ENCODE measurements at regions of chr2 and their contacts with region 1.

Region 1: DNA sequence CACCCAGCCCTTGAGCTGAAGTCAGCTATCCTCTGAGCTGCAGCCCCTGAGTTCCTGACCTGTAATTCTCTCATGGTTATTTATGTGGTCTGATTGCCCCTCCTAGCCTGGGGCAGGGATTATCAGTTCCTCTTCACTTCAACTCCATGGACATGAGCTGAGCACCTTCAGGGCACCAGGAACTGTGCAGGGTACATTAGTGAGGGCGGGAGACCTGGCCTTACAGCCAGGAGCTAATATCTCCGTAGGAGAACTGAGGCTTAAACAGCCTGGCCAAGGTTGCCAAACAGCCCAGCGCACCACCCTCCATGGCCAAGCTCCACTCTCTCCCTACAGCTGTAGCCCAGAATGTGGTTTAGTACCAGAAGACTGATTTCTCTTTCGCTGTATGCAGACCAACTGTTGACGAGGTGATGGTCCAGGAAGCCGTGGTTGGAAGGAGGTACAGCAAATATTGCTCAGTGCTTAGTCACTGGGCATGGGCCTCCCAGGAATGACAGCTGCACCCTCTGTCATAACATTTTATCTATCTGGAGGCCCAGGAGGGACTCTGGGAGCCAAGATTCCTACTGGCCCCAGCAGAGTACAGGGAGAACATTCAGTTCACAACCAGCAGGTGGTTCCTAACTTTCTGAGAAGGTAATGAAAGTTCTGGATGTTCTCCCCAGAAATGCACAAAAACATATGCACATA is 228.7 kb upstream of the SIX2 start:
- DNase-seq: peak; percentile 92 to 93
- ATAC-seq: peak; percentile 87 to 89
- H3K4me3 ChIP-seq: peak overlapping the region in 3 of 4 donors; percentile 5 to 30 (median 29)
- H3K27ac ChIP-seq: peak overlapping the region; percentile 89 to 95 (median 92)
- H3K4me1 ChIP-seq: peaks cover 40 to 50% of the 10 kb centered on the region in 2 donors
- H3K27me3 ChIP-seq: no peaks in the 10 kb centered on the region
- CTCF ChIP-seq: peak; percentile 35 to 62 (median 53)
- POLR2A ChIP-seq: peak; percentile 33 to 44

Region 2: DNA sequence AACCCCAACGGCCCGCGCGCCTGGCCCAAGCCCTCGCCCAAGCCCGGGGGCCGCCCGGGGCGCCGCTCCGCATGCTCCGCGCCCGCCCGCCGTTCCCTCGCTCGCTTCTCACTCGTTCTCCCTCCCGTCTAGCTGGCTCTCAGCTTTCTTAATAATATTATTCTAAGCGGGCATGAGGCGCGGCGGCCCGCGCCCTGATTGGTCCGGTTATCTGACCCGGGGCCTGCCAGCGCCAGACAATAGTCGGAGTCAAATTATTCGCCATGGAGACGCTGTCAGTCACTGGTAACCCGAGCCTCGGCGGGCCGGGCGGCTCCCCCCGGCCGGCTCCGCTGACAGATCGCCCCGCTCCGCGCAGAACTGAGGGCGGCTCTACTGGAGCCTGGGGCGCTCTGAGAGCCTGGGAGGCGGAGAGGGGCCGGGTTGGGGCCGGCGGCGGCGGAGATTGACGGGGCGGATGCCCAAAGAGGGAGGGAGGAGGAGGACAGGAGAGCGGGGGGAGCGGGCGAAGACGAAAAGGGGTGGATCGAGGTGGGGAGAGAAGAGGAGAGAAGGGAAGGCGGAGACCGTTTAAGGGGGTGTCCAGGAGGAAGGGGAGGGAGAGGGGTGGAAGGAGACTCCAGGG is 228.6 kb before region 1 on chr2 and contains the start of gene SIX2:
- in situ Hi-C with region 1: no loop called
- intact Hi-C with region 1: loop called (anchors 5 kb)
- DNase-seq: peak; percentile 95 to 97
- ATAC-seq: peak; percentile 80 to 84
- H3K4me3 ChIP-seq: peak within 1 kb of the TSS; percentile 64 to 85 (median 72)
- H3K27ac ChIP-seq: peak within 1 kb of the TSS; percentile 90 to 97 (median 90)
- H3K4me1 ChIP-seq: peaks cover 20 to 49% of the 10 kb centered on the region in 2 donors
- H3K27me3 ChIP-seq: peaks cover 0 to 25% (median 0%) of the 10 kb centered on the region in 3 donors
- CTCF ChIP-seq: peak in 1 of 5 experiments; percentile 10
- POLR2A ChIP-seq: peak; percentile 87 to 96
- total RNA-seq, gene SIX2: 28.9 to 65.5 (median 50.5) TPM

Region 3: DNA sequence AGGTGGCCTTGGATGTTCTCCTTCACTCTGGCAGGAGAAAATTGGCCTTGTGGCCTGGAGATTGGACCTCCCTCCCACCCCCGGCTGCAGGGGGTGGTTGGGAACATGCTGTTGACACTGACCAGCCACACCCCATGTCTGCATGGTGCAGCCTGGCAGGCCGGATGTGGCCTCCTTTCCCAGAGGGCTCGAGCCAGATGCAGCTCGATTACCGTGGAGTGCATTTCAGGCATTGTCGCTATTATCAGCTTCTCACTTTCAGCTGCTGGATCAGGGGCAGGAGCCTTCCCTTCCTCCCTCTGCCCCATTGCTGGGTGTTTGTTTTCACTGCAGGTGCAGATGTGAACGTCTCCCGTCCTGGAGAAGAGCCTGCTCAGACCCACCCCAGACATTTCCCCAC is 17.8 kb before region 1 on chr2:
- in situ Hi-C with region 1: no loop called
- intact Hi-C with region 1: loop called (anchors 2 kb)
- DNase-seq: peak; percentile 76 to 81
- ATAC-seq: peak; percentile 88 to 89
- H3K4me3 ChIP-seq: no peak overlapping the region
- H3K27ac ChIP-seq: peak overlapping the region; percentile 23 to 76 (median 48)
- H3K4me1 ChIP-seq: peaks cover 13 to 15% of the 10 kb centered on the region in 2 donors
- H3K27me3 ChIP-seq: no peaks in the 10 kb centered on the region
- CTCF ChIP-seq: no peak
- POLR2A ChIP-seq: peak in 1 of 2 donors; percentile 12

Region 4: GRCh38 chr2:45699032-45699658 is 461.1 kb after region 1 on chr2:
- in situ Hi-C with region 1: no loop called
- intact Hi-C with region 1: loop called (anchors 10 kb)
- DNase-seq: no peak
- ATAC-seq: no peak
- H3K4me3 ChIP-seq: no peak overlapping the region
- H3K27ac ChIP-seq: no peak overlapping the region
- H3K4me1 ChIP-seq: peaks cover 2 to 15% of the 10 kb centered on the region in 2 donors
- H3K27me3 ChIP-seq: no peaks in the 10 kb centered on the region
- CTCF ChIP-seq: no peak
- POLR2A ChIP-seq: no peak

Region 5: DNA sequence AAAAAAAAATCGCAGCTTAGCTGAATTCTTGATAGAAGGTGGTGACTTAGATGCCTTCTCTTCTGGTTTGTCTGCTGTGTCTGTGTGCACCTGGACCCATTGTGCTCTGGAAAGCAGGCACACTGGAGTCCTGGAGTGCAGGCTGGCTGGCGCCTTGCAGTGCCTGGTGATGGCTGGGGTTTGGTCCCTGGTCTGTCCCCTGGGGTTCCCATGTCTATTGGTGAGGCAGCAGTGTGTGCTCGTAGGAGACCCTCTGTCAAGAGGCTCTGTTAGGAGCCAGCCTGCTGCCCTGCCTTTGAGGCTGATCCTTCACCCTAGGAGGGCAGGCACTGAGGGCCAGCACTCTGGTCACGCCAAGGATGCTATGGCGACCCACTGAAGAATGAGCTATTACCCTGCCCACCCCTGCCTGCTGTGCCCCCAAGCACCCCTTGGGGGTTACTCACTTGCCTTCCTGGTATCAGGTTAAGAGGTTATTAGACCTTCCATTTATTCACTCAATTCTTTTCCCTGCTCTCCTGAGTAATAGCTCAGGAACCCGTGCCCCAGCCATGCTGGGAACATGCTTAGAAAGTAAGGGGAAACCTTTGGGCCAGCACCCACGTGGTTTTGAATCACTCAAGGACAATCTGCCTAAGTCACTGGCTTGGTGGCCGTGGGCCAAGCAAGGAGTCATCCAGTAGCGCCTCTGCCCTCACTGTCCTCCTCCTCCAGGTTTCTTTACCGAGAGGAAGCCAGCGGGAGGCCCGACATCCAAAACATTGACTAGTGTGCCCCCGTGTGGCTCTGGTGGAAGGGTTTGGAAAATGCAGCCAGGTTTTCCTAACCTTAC is 698.0 kb after region 1 on chr2:
- in situ Hi-C with region 1: no loop called
- intact Hi-C with region 1: loop called (anchors 2 kb)
- DNase-seq: peak; percentile 99 to 100
- ATAC-seq: peak; percentile 94
- H3K4me3 ChIP-seq: no peak overlapping the region
- H3K27ac ChIP-seq: peak overlapping the region; percentile 82 to 89 (median 86)
- H3K4me1 ChIP-seq: peaks cover 22 to 35% of the 10 kb centered on the region in 2 donors
- H3K27me3 ChIP-seq: no peaks in the 10 kb centered on the region
- CTCF ChIP-seq: peak; percentile 77 to 87 (median 80)
- POLR2A ChIP-seq: no peak